ENCODE measurements at regions of chr3 and their contacts with region 1.

Region 1: GRCh38 chr3:44976002-44976815 is at the starts of genes EXOSC7 and ZDHHC3:
- DNase-seq: peak; percentile 73 to 89 (median 85)
- ATAC-seq: peak; percentile 98
- H3K4me3 ChIP-seq: peak within 1 kb of the TSS; percentile 94
- H3K4me3 Mint-ChIP-seq: peak within 1 kb of the TSS; percentile 90 to 97 (median 94)
- H3K27ac ChIP-seq: peak within 1 kb of the TSS; percentile 98
- H3K27ac Mint-ChIP-seq: peak within 1 kb of the TSS; percentile 85 to 97 (median 94)
- H3K4me1 ChIP-seq: peaks cover 21 to 37% of the 10 kb centered on the region in 2 donors
- H3K4me1 Mint-ChIP-seq: peaks cover 50 to 87% (median 79%) of the 10 kb centered on the region in 7 donors
- H3K27me3 ChIP-seq: no peaks in the 10 kb centered on the region
- H3K27me3 Mint-ChIP-seq: no peaks in the 10 kb centered on the region
- total RNA-seq, gene EXOSC7: 30.7 to 57.9 (median 44.3) TPM
- total RNA-seq, gene ZDHHC3: 38.5 to 54.0 (median 48.8) TPM

Region 2: DNA sequence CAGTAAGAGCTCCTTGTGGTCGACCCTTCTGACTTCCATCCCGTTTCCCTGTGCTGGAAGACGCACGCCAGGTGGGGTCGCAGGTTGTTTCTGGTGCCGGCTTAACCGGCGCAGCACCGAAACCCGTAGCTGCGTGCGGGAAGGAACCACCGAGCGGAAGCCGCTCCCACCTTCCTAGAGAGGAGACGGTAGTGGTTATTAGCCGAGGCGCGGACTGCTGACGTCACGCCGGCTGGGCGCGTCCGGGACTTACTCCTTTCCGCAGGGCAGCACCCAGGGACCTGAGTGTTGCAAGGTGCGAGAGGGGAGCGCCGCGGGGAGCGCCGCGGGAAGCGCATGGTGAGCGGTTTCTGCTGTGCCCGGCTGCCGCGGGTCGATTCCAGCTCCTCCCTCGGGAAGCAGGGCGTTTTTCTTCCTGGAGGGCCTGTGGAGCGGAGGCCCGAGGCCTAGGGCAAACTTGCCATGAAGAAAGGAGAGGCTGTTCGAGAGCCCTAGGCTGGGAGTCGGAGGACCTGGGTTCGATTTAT is 246.8 kb before region 1 on chr3 and contains the start of gene ZNF501:
- CTCF ChIA-PET with region 1: no interaction called
- POLR2A ChIA-PET with region 1: no interaction called
- intact Hi-C with region 1: loop called in 1 of 2 experiments (anchors 1 kb)
- DNase-seq: peak; percentile 65 to 83 (median 75)
- ATAC-seq: peak; percentile 97
- H3K4me3 ChIP-seq: peak within 1 kb of the TSS; percentile 75
- H3K4me3 Mint-ChIP-seq: peak within 1 kb of the TSS; percentile 90 to 99 (median 92)
- H3K27ac ChIP-seq: peak within 1 kb of the TSS; percentile 45
- H3K27ac Mint-ChIP-seq: peak within 1 kb of the TSS; percentile 61 to 91 (median 84)
- H3K4me1 ChIP-seq: no peaks in the 10 kb centered on the region
- H3K4me1 Mint-ChIP-seq: peaks cover 2 to 20% (median 15%) of the 10 kb centered on the region in 7 donors
- H3K27me3 ChIP-seq: no peaks in the 10 kb centered on the region
- H3K27me3 Mint-ChIP-seq: no peaks in the 10 kb centered on the region
- total RNA-seq, gene ZNF501: 1.1 to 5.3 (median 2.6) TPM

Region 3: GRCh38 chr3:44861412-44862220 is 114.6 kb before region 1 on chr3 and contains the start of gene TMEM42:
- CTCF ChIA-PET with region 1: no interaction called
- POLR2A ChIA-PET with region 1: no interaction called
- intact Hi-C with region 1: loop called (anchors 1 to 5 kb)
- DNase-seq: peak; percentile 81 to 89 (median 84)
- ATAC-seq: peak; percentile 97
- H3K4me3 ChIP-seq: peak within 1 kb of the TSS; percentile 78
- H3K4me3 Mint-ChIP-seq: peak within 1 kb of the TSS; percentile 88 to 92 (median 91)
- H3K27ac ChIP-seq: peak within 1 kb of the TSS; percentile 76
- H3K27ac Mint-ChIP-seq: peak within 1 kb of the TSS; percentile 86 to 97 (median 92)
- H3K4me1 ChIP-seq: peaks cover 15 to 29% of the 10 kb centered on the region in 2 donors
- H3K4me1 Mint-ChIP-seq: peaks cover 23 to 48% (median 43%) of the 10 kb centered on the region in 7 donors
- H3K27me3 ChIP-seq: no peaks in the 10 kb centered on the region
- H3K27me3 Mint-ChIP-seq: no peaks in the 10 kb centered on the region
- total RNA-seq, gene TMEM42: 12.1 to 25.1 (median 16.4) TPM

Region 4: DNA sequence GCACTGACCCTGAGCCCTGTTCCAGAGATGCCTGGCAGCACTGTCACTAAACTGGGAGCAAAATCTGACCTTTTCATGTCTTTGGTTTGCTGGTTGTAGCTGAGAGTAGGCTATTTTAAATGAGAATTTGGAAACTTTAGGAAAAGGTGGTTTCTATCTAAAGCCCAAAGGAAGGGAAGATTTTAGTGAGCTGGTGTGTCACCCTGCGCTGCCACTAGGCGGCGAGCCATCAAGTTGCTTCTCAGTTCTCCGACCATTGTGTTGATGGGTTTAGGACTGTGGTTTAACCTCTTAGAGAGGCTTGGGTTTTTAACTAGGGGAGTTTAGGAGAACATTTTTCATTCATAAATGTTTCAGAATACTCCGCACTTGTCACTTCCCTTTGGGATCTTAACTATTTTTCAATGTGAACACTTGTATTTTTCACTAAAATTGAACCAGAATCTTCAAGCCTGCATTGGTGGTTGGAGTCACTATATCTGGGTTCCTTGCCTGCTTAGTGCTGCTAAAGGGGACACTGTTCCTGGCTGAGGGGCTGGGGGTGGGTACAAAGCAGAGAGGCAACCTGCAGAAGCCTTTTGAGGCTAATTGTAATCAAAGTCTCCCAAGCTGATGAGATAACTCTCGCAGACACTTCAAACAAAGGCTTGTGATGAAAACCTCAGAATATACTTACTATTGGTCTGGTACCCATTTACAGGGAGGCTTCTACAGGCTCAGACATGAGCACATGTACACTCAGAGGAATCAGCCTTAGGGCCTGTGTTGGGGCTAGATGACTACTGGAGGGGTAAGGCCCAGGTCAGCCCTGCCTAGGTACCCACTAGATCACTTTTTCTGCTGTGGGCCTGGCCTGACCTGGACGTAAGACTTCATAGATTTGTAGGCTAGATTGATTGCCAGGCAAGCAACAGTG is 16.6 kb after region 1 on chr3:
- CTCF ChIA-PET with region 1: interaction called, 4 read pairs
- POLR2A ChIA-PET with region 1: interaction called, 10 read pairs
- intact Hi-C with region 1: loop called in 1 of 2 experiments (anchors 2 kb)
- DNase-seq: peak in 1 of 9 donors; percentile 20
- ATAC-seq: peak; percentile 73
- H3K4me3 ChIP-seq: no peak overlapping the region
- H3K4me3 Mint-ChIP-seq: peak overlapping the region in 3 of 10 donors; percentile 21 to 74 (median 40)
- H3K27ac ChIP-seq: no peak overlapping the region
- H3K27ac Mint-ChIP-seq: peak overlapping the region in 6 of 9 donors; percentile 53 to 76 (median 61)
- H3K4me1 ChIP-seq: peaks cover 0 to 30% of the 10 kb centered on the region in 2 donors
- H3K4me1 Mint-ChIP-seq: peaks cover 37 to 95% (median 91%) of the 10 kb centered on the region in 7 donors
- H3K27me3 ChIP-seq: no peaks in the 10 kb centered on the region
- H3K27me3 Mint-ChIP-seq: no peaks in the 10 kb centered on the region

Region 5: DNA sequence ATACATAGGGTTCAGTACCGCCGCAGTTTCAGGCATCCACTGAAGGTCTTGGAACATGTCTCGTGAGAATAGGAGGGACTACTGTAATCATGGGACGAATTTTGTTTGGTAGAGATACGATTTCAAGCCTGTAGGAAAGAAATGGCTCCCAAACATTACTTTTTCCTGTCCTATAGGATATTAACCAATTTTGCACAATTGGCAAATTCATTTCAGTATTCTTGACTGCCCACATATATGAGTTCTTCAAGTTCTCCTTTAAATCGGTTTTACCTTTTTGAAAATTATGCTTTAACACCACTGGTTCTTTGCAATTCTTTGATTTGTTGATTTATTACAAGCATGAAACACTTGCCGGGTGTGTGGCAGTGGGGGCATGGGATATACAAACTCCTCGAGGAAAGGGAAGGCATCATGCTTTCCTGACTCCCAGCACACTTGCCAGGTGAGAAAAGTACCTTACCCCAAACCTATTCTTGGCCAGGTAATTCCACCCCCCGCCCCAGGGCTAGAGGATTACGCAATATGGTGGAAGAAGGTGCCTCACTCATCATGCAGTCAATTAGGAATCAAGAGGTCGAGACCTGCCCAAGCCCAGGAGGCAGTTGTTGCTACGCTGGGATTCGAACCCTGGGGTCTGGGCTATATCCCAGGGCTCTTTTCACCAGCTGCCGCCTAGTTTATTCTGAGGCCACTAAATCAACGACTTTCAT is 411.6 kb after region 1 on chr3:
- CTCF ChIA-PET with region 1: no interaction called
- POLR2A ChIA-PET with region 1: no interaction called
- intact Hi-C with region 1: loop called in 1 of 2 experiments (anchors 1 kb)
- DNase-seq: no peak
- ATAC-seq: no peak
- H3K4me3 ChIP-seq: peak overlapping the region; percentile 95
- H3K4me3 Mint-ChIP-seq: peak overlapping the region; percentile 94 to 99 (median 97)
- H3K27ac ChIP-seq: peak overlapping the region; percentile 77
- H3K27ac Mint-ChIP-seq: peak overlapping the region; percentile 38 to 97 (median 91)
- H3K4me1 ChIP-seq: peaks cover 4 to 8% of the 10 kb centered on the region in 2 donors
- H3K4me1 Mint-ChIP-seq: peaks cover 6 to 27% (median 18%) of the 10 kb centered on the region in 7 donors
- H3K27me3 ChIP-seq: no peaks in the 10 kb centered on the region
- H3K27me3 Mint-ChIP-seq: peaks cover 0 to 35% (median 4%) of the 10 kb centered on the region in 5 donors

Region 6: DNA sequence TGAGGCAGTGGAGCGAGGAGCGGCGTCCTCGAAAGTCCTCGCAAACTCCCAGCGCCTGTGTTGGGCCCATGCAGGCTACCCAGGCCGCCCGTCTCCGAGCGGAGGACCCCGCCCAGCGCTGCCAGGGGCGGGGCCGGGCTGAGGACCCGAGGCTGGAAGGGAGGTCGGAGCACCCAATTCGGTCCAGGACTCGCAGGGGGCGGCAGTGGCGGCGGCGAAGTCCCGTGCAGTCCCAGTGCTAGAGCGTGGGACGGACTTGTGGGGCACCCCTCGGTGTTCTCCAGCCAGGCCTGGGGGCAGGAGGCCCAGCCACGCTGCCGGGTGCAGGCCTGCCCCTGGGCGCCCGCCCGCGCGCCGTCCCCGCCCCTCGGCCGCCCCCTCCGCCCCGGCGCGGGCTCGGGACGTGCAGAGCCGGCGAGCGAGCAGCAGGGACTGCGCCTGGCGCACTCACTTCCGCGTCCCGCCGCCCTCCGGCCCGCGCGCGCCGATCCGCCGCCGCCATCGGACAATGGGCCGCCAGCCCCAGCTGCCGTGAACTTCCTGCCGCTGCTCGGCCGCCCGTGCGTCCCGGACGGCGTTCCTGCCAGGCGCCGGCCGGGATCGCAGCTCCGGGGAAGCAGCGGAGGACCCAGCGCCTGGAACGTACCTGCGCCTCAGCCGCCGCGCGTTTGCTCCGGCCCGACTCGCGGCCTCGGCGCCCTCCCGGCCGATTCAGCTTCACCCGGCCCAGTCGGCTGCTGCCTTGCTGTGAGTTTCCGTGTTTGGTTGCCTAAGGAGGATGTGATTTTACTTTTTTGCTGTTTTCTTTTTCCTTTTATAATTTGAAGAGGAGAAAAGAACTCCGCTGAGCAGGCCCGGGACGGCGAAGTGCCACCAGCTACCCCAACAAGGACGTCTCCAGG is 617.8 kb after region 1 on chr3:
- CTCF ChIA-PET with region 1: no interaction called
- POLR2A ChIA-PET with region 1: no interaction called
- intact Hi-C with region 1: loop called in 1 of 2 experiments (anchors 5 kb)
- DNase-seq: peak; percentile 46 to 83 (median 70)
- ATAC-seq: peak; percentile 83
- H3K4me3 ChIP-seq: peak overlapping the region; percentile 71
- H3K4me3 Mint-ChIP-seq: peak overlapping the region; percentile 84 to 99 (median 90)
- H3K27ac ChIP-seq: peak overlapping the region; percentile 72
- H3K27ac Mint-ChIP-seq: peak overlapping the region; percentile 85 to 96 (median 91)
- H3K4me1 ChIP-seq: peaks cover 44 to 58% of the 10 kb centered on the region in 2 donors
- H3K4me1 Mint-ChIP-seq: peaks cover 48 to 61% (median 55%) of the 10 kb centered on the region in 7 donors
- H3K27me3 ChIP-seq: no peaks in the 10 kb centered on the region
- H3K27me3 Mint-ChIP-seq: peaks cover 0 to 3% (median 0%) of the 10 kb centered on the region in 5 donors